CD4-positive, alpha-beta memory T cell (primary cell): ENCODE measurements at regions of chr2 and their contacts with region 1.

Region 1: DNA sequence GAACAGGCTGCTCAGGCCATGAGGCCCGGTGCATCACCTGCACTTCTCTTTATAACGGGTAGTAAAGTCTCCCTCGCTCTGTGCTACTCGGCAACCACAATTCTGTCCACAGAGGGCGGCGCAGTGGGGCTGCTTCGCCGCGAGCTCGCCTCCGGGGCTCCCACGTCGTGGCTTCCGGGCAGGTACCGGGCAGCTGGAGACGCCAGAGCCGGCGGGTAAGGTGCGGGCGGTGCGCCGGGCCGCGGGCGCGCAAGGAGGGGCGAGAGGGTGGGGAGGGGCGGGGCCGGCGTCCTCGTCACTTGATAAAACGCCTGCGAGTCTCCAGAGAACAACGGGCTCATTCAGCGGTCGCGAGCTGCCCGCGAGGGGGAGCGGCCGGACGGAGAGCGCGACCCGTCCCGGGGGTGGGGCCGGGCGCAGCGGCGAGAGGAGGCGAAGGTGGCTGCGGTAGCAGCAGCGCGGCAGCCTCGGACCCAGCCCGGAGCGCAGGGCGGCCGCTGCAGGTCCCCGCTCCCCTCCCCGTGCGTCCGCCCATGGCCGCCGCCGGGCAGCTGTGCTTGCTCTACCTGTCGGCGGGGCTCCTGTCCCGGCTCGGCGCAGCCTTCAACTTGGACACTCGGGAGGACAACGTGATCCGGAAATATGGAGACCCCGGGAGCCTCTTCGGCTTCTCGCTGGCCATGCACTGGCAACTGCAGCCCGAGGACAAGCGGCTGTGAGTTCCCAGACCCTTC is at the start of gene ITGA6:
- DNase-seq: peak; percentile 75 to 84 (median 78)
- H3K4me3 ChIP-seq: peak within 1 kb of the TSS; percentile 31 to 76
- H3K4me3 Mint-ChIP-seq: peak within 1 kb of the TSS; percentile 88 to 97 (median 94)
- H3K27ac ChIP-seq: peak within 1 kb of the TSS; percentile 66
- H3K27ac Mint-ChIP-seq: peak within 1 kb of the TSS; percentile 92 to 95 (median 93)
- H3K4me1 ChIP-seq: peaks cover 65% of the 10 kb centered on the region
- H3K4me1 Mint-ChIP-seq: peaks cover 30 to 52% (median 46%) of the 10 kb centered on the region in 4 donors
- H3K27me3 ChIP-seq: no peaks in the 10 kb centered on the region
- H3K27me3 Mint-ChIP-seq: no peaks in the 10 kb centered on the region
- total RNA-seq, gene ITGA6: 69.1 to 73.6 TPM

Region 2: DNA sequence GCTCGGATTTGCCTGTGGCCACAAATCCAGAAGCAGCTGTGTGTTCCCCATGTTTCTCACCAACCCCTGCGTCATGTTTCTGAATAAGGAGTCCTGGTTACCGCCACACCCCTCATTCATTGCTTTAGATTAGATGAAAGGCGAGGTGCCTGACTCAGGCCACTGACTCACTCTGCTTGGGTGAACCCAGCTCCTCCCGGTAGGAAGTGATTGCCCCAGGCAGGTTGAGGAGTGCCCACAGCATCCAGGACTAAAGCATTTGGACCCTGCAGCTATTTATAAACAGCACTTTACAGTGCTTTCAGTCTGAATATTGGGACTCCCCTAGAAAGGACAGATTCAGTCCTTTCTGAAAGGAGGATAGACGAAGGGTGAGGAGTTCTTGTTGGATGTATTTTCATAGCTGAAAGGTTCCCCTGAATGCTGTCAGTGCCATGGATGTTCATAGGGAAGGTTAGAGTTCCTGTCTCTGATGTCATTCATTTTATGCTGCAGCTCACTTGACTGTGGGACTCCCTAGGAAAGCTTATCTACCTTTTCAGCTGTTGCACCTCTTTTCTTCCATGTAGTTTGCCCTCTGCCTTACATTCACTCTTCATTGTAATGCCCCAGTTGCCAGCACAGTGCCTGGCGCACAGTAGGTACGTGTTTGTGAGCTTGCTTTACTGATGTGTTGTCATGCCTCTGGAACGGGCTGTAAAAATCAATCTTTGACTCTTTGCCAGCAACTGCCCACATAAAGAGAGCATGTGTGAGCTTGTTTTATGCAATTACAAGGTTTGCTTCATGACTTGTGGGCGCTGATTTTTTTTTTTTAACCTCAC is 14.9 kb after region 1 on chr2:
- CTCF ChIA-PET with region 1: interaction called, 119 read pairs
- POLR2A ChIA-PET with region 1: interaction called, 169 read pairs
- intact Hi-C with region 1: loop called (anchors 1 kb)
- DNase-seq: peak in 1 of 5 donors; percentile 81
- H3K4me3 ChIP-seq: peak overlapping the region in 1 of 2 donors; percentile 39
- H3K4me3 Mint-ChIP-seq: peak overlapping the region; percentile 78 to 95 (median 84)
- H3K27ac ChIP-seq: no peak overlapping the region
- H3K27ac Mint-ChIP-seq: peak overlapping the region; percentile 75 to 89 (median 89)
- H3K4me1 ChIP-seq: peaks cover 84% of the 10 kb centered on the region
- H3K4me1 Mint-ChIP-seq: peaks cover 21 to 75% (median 53%) of the 10 kb centered on the region in 4 donors
- H3K27me3 ChIP-seq: no peaks in the 10 kb centered on the region
- H3K27me3 Mint-ChIP-seq: no peaks in the 10 kb centered on the region